ENCODE measurements at regions of chr3 and their contacts with region 1.

Region 1: DNA sequence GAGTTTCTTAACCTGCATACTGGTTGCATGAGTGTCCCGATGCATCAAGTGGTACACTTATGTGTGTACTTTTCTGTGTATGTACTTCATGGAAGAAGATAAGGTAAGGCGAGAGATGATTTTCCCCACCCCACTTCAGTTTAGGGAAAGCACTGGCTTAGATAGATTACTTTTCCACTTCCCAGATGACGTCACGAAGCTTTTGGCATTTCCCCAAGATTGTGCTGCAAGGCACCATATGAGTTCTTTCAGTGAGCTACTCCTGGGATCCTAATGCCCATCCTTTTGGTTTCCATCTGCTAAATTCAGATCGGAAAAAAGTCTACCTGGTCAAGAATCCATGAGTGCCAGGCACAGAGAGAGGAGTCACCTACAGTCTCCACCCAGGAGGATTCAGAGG is 4.5 kb downstream of the IL17RB start:
- DNase-seq: peak; percentile 24
- H3K4me3 ChIP-seq: no peak overlapping the region
- H3K27ac ChIP-seq: no peak overlapping the region
- H3K27me3 ChIP-seq: peaks cover 28% of the 10 kb centered on the region
- CTCF ChIP-seq: no peak

Region 2: DNA sequence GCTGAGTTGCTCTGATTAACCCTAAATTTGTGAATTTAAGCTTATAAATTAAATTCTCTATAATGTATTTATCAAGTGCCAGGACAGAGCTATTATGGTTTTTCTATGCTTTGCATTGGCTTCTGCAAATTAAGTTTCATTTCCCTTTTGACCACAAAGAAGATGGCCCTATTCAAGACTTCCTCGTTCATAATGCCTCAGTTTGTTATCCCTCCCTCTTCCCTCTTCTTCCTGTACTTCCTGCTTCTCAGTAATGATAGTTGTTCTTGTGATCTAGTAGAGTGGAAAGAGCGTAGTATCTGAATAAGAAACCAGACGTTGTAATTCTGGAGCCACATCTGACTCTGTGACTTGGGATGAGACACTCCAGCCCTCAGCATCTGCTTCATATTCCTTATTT is 237.8 kb before region 1 on chr3:
- CTCF ChIA-PET with region 1: no interaction called
- POLR2A ChIA-PET with region 1: no interaction called
- DNase-seq: no peak
- H3K4me3 ChIP-seq: no peak overlapping the region
- H3K27ac ChIP-seq: no peak overlapping the region
- H3K27me3 ChIP-seq: no peaks in the 10 kb centered on the region
- CTCF ChIP-seq: no peak

Region 3: DNA sequence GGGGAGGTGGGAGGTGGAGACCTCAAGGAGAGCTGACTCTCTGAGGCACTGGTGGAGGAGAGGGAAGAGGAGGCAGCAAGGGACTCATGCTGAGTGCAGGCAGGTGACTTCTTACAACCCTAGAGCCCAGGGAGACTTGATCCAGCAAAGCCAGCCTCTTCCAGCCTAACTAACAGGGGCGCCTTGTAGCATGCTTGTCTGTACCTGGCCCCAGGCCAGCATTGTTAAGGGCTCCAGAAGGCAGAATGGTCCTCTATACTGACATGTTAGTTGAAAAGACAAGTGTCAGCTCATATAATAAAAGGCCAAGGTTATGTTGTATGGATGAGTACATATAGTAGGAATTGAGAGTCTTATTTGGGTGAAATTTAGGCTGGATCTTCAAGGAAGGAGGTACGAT is 70.1 kb before region 1 on chr3:
- CTCF ChIA-PET with region 1: no interaction called
- POLR2A ChIA-PET with region 1: interaction called, 11 read pairs
- DNase-seq: no peak
- H3K4me3 ChIP-seq: no peak overlapping the region
- H3K27ac ChIP-seq: no peak overlapping the region
- H3K27me3 ChIP-seq: peaks cover 6% of the 10 kb centered on the region
- CTCF ChIP-seq: no peak

Region 4: DNA sequence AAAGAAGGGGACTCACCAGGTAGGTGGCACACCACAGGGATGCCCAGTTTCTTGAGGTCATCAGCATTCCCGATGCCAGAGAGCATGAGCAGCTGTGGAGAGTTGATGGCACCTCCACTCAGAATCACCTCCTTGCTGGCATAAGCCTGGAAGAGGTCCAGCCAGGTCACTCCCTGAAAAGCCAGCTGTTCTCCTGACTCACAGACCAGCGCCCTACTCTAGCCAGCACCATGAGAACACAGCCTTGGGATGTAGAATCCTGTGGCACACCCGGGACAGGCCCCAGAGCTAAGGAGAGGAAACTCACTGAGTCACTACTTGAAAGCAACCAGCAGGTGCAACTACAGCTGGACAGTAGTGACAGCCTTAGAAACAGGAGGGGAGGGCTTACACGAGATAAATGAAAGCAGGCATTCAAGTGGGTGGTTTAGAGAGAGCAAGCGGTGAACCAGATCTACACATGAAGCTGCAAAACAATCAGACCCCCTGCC is 29.2 kb before region 1 on chr3:
- CTCF ChIA-PET with region 1: no interaction called
- POLR2A ChIA-PET with region 1: no interaction called
- DNase-seq: no peak
- H3K4me3 ChIP-seq: no peak overlapping the region
- H3K27ac ChIP-seq: no peak overlapping the region
- H3K27me3 ChIP-seq: peaks cover 3% of the 10 kb centered on the region
- CTCF ChIP-seq: no peak

Region 5: GRCh38 chr3:53837331-53837730 is 13.6 kb before region 1 on chr3:
- CTCF ChIA-PET with region 1: no interaction called
- POLR2A ChIA-PET with region 1: no interaction called
- DNase-seq: no peak
- H3K4me3 ChIP-seq: no peak overlapping the region
- H3K27ac ChIP-seq: no peak overlapping the region
- H3K27me3 ChIP-seq: no peaks in the 10 kb centered on the region
- CTCF ChIP-seq: no peak

Measured in AG04450 (cell line).